Aorta (tissue), 5 donors: ENCODE measurements at regions of chr9 and their contacts with region 1.

Region 1: DNA sequence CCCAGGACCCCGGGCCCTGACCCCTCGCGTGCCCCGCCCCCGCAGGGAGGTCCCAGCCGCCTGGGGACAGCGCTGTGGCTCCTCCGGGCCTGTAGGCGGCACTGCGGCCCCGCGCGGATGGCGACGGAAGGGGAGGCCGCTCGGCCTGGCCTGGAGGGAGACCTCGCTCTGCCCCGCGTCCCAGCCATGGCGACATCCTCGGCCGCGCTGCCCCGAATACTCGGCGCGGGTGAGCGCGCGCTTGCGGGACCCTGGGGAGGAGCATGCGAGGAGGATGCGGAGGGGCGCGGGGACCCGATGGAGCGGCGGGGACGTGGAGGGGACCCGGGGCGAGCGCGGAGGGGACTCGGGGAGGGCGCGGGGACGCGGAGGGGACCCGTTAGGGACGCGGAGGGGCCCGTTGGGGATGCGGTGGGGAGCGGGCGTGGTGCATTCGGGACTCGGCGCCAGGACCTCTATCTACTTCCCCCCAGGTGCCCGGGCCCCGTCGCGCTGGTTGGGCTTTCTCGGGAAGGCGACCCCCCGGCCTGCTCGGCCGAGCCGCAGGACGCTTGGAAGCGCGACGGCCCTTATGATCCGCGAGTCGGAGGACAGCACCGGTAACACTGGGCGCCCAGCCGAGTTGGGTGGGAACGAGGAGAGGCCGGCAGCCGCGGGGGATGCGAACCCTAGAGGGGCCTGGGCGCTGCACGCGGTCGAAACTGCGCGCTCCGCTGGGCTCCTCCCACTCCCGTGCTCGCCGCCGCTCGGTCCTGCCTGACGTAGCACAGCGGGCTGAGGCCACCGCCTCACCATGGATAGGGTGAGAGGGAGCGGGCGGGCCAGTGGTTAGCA is at the start of gene MRPS2:
- DNase-seq: peak; percentile 93 to 96
- ATAC-seq: peak; percentile 97
- H3K4me3 ChIP-seq: peak within 1 kb of the TSS; percentile 74 to 85
- H3K27ac ChIP-seq: no peak within 1 kb of the TSS
- H3K4me1 ChIP-seq: no peaks in the 10 kb centered on the region
- H3K27me3 ChIP-seq: no peaks in the 10 kb centered on the region
- total RNA-seq, gene MRPS2: 16.1 to 20.5 TPM

Region 2: GRCh38 chr9:135480071-135480941 is 20.4 kb before region 1 on chr9:
- intact Hi-C with region 1: loop called in 1 of 2 experiments (anchors 2 kb)
- DNase-seq: no peak
- ATAC-seq: peak; percentile 33
- H3K4me3 ChIP-seq: peak overlapping the region; percentile 89 to 96
- H3K27ac ChIP-seq: no peak overlapping the region
- H3K4me1 ChIP-seq: no peaks in the 10 kb centered on the region
- H3K27me3 ChIP-seq: no peaks in the 10 kb centered on the region